ENCODE measurements at regions of chr3 and their contacts with region 1.

Region 1: DNA sequence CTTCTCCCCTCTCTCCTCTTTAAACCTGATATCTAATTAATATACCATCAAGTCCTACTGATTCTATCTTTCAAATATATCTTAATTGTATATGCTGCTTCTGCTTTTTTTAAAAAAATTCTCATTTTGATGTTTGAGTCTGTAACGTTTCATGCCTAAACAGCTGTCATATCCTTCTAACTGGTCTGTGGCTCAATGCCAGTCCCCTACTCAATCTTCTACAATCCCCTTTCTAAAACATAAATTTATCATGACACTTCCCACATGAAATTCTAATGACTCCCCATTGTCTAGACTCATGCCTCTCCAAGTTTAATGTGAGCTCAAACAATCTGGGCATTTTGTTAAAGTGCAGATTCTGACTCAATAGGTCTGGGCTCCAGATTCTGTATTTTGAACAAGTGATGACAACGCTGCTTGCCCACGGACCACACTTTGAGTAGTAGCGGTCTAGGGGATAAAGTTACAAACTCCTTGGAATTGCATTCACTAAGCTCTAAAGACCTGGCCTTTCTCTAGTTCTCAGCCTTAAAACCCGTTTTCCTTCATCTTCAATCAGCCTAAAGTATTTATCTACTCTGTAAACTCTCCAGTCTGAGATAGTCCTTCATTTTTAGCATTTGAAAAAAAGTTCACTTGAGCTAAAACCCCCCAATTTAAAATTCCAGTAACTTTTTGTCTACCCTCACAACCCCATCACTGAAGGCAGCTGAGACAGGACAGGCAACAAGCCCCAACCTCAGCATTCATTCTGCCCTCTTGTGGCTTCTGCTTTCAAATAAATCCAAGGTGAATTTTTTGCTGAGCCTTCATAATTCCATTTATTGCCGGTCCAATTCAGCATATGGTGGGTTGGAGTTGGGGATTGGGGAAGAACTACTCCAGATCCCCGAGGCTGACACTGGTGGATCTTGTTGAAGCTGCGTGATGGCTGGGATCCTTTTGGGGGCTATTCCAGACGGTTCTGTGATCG is 88.1 kb upstream of the THRB start:
- DNase-seq: no peak

Region 2: GRCh38 chr3:24663418-24663817 is 80.7 kb after region 1 on chr3:
- intact Hi-C with region 1: no loop called
- DNase-seq: no peak

Region 3: GRCh38 chr3:25817107-25817506 is 1234.4 kb after region 1 on chr3:
- intact Hi-C with region 1: loop called in 1 of 2 experiments (anchors 5 kb)
- DNase-seq: no peak